Endothelial cell of umbilical vein (primary cell): ENCODE measurements at regions of chr22 and their contacts with region 1.

Region 1: GRCh38 chr22:28600546-28601143 is 79.0 kb downstream of the TTC28 start:
- DNase-seq: peak; percentile 73
- H3K4me3 ChIP-seq: no peak overlapping the region
- H3K27ac ChIP-seq: no peak overlapping the region
- H3K4me1 ChIP-seq: peaks cover 8% of the 10 kb centered on the region
- H3K27me3 ChIP-seq: no peaks in the 10 kb centered on the region
- CTCF ChIP-seq: peak in 1 of 2 donors; percentile 10
- POLR2A ChIP-seq: no peak

Region 2: DNA sequence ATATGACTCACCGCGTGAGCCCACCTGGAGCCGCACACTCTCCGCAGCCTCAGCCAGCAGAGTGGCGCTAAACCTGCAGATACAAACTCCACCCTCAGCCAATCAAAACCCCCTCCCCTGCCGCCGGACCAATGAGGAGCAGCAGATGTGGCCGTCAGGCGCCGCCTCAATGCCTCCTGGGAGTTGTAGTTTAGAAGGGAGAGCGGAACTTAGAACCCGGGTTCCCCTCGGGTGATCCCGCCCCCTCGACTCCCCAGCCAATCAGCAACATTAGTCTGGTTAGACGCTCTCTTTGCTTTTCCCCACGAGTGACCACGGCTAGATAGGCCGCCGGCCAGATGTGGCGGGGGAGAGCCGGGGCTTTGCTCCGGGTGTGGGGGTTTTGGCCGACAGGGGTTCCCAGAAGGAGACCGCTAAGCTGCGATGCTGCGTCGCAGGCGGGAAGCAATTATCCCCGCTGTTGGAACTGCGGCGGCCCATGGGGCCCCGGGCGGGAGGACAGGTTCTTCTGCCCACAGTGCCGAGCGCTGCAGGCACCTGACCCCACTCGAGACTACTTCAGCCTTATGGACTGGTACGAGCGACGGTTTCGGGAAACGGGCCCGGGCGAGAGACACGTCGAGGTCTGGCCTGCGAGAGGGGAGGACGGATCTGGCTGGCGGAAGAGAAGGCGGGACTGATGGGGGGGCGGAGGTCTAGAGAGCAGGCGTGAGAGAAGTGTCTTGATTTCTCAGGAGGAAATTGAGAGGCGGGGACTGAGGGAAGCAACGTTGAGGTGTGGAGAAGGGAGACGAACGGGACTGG is 141.3 kb after region 1 on chr22 and contains the starts of genes CHEK2 and HSCB:
- CTCF ChIA-PET with region 1: interaction called, 6 read pairs
- POLR2A ChIA-PET with region 1: no interaction called
- dilution Hi-C with region 1: no loop called
- intact Hi-C with region 1: loop called (anchors 2 kb)
- DNase-seq: peak; percentile 99
- H3K4me3 ChIP-seq: peak within 1 kb of the TSS; percentile 75 to 87 (median 77)
- H3K27ac ChIP-seq: peak within 1 kb of the TSS; percentile 84
- H3K4me1 ChIP-seq: peaks cover 12% of the 10 kb centered on the region
- H3K27me3 ChIP-seq: no peaks in the 10 kb centered on the region
- CTCF ChIP-seq: peak in 1 of 2 donors; percentile 11
- POLR2A ChIP-seq: no peak
- total RNA-seq, gene CHEK2: 24.6 and 27.4 TPM in 2 replicates
- total RNA-seq, gene HSCB: 14.1 and 20.3 TPM in 2 replicates

Region 3: GRCh38 chr22:28783786-28784671 is 183.4 kb after region 1 on chr22:
- CTCF ChIA-PET with region 1: interaction called, 25 read pairs
- POLR2A ChIA-PET with region 1: no interaction called
- dilution Hi-C with region 1: no loop called
- intact Hi-C with region 1: no loop called
- DNase-seq: peak; percentile 55
- H3K4me3 ChIP-seq: no peak overlapping the region
- H3K27ac ChIP-seq: no peak overlapping the region
- H3K4me1 ChIP-seq: no peaks in the 10 kb centered on the region
- H3K27me3 ChIP-seq: no peaks in the 10 kb centered on the region
- CTCF ChIP-seq: no peak
- POLR2A ChIP-seq: no peak

Region 4: DNA sequence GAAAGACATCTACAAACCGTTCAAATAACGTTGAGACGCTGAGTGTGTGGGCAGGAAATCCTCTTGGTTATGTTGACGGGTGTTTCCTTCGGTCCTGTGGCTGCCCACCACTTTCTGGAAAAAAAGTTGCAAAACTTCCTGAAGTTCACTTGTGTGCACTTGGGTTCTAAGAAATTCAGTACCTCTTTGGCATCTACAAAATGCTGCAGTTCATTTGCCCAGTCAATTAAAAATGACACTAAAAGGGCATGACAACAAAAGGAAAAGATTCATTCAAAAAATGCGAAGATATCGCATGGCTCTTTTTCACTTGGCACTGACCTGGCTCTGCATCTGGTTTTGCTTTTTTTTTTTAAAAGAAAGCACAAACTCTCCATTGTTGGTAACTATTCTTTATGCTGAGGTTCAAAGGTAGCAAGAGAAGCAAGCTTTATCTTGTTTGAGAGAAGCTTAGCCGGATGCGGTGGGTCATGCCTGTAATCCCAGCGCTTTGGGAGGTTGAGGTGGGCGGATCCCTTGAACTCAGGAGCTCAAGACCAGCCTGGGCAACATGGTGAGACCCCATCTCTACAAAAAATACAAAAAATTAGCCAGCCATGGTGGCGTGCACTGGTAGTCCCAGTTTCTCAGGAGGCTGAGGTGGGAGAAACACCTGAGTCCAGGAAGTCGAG is 210.3 kb after region 1 on chr22:
- CTCF ChIA-PET with region 1: interaction called, 13 read pairs
- POLR2A ChIA-PET with region 1: no interaction called
- dilution Hi-C with region 1: no loop called
- intact Hi-C with region 1: no loop called
- DNase-seq: peak; percentile 88
- H3K4me3 ChIP-seq: peak overlapping the region in 1 of 3 experiments; percentile 2
- H3K27ac ChIP-seq: no peak overlapping the region
- H3K4me1 ChIP-seq: peaks cover 10% of the 10 kb centered on the region
- H3K27me3 ChIP-seq: no peaks in the 10 kb centered on the region
- CTCF ChIP-seq: no peak
- POLR2A ChIP-seq: no peak

Region 5: DNA sequence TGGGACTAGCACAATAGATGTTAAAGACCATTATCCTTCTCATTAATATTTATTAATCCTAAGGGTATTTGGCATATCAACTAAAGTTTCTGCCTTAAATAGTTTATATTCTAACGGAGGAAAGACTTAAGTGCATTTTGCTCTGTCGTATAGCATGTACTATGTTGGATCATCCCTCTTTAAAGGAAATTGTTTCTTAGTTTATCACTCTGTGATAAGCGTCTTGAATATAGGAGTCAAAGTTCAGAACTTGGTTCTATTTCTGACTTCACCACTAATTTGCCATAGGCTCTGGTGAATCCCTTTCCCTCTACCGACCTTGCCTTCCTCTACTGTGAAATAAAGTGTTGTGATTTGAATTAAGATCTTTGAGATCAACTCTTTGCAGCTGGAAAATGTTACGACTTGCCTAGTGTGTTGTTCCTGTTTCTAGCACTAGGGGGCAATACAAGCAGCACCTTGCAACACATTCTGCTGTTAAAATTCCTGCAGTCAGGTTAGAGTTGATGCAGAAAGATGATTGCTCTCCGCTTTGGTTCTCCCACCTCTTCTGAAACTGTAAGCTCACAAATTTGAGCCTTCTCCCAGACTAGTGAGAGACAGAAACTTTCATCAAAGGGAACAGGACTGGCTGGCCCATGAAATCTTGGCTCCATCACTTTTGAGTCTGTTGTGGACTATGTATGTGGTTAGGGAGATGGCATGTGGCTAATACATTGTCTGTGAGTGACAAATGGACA is 254.9 kb after region 1 on chr22:
- CTCF ChIA-PET with region 1: interaction called, 14 read pairs
- POLR2A ChIA-PET with region 1: no interaction called
- dilution Hi-C with region 1: no loop called
- intact Hi-C with region 1: no loop called
- DNase-seq: peak; percentile 80
- H3K4me3 ChIP-seq: no peak overlapping the region
- H3K27ac ChIP-seq: no peak overlapping the region
- H3K4me1 ChIP-seq: no peaks in the 10 kb centered on the region
- H3K27me3 ChIP-seq: no peaks in the 10 kb centered on the region
- CTCF ChIP-seq: peak; percentile 74 to 79
- POLR2A ChIP-seq: no peak

Region 6: DNA sequence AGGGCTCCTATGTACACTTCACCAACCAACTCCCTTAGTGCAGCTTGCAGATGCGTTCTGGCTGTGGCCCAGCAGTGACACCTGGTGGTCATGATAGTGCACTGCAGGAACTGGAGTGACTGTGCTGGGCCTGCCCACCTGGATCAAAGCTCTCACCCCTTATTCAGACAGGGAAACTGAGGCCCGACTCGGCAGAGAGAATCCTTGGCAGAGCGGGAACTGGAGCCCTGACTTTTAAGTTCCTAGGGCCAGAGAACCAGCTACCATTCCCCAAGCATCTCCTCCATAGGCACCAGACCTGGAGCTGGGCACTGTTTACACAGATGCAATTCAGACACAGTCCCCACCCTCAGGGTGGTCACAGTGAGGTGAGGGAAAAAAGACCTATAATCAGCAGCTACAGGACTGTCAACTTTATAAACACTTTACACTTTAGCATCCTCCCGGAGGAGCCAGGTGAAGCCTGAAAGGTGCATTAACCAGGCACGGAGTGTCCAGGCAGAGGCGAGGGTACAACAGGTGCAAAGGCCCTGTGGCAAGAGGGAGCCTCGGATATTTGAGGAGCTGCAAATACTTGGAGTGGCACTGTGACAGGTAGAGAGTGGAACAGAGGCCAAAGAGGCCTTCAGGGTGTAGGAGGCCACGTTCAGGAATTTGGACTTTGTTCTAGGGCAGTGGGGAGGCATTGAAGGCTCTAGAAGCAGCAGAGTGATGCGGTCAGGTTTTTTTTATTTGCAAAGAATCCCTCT is 645.2 kb after region 1 on chr22:
- CTCF ChIA-PET with region 1: interaction called, 22 read pairs
- POLR2A ChIA-PET with region 1: no interaction called
- dilution Hi-C with region 1: no loop called
- intact Hi-C with region 1: no loop called
- DNase-seq: peak; percentile 58
- H3K4me3 ChIP-seq: no peak overlapping the region
- H3K27ac ChIP-seq: no peak overlapping the region
- H3K4me1 ChIP-seq: no peaks in the 10 kb centered on the region
- H3K27me3 ChIP-seq: peaks cover 3 to 5% of the 10 kb centered on the region in 2 experiments
- CTCF ChIP-seq: peak; percentile 91 to 97
- POLR2A ChIP-seq: no peak